BJ (cell line): ENCODE measurements at regions of chr3 and their contacts with region 1.

Region 1: GRCh38 chr3:24101676-24102168 is 156.6 kb downstream of the NR1D2 start:
- DNase-seq: no peak
- H3K4me3 ChIP-seq: no peak overlapping the region
- H3K27me3 ChIP-seq: no peaks in the 10 kb centered on the region
- CTCF ChIP-seq: no peak

Region 2: DNA sequence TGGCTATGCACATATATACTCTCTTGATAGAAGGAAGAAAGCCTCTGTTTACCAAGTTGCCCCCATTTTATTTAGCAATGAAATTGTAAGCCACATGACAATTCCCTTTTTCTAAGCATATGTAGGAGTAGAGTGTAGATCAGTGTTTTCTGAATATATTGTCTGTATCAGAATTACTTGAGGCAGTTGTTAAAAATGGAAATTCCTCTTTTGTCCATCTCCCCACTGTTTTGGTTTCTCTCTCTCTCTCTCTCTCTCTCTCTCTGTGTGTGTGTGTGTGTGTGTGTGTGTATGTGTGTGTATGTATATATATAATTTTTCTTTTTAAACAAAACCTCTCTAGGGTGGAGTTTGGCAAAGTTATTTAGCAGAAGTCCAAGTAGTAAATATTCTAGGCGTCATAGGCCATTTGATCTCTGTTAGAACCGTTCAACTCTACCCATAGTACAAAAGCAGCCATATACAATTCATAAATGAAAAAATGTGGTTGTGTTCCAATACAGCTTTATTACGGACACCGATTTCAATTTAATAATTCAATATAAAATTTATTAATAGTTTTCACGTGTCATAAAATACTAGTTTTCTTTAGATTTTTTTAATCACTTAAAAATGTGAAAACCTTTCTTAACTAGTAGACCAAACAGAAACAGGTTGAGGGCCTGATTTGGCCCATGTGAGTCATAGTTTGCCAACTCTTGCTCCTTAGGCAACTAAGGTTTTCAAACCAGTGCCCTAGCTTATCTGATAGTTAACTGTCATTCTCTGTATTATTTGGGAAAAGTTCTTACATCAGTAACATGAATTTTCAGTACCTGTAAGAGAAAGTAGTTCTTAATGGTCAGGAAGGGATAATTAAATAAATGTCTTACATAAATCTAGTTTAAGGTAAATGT is 256.1 kb before region 1 on chr3:
- CTCF ChIA-PET with region 1: no interaction called
- POLR2A ChIA-PET with region 1: no interaction called
- DNase-seq: no peak
- H3K4me3 ChIP-seq: no peak overlapping the region
- H3K27me3 ChIP-seq: no peaks in the 10 kb centered on the region
- CTCF ChIP-seq: no peak

Region 3: GRCh38 chr3:24088782-24089181 is 12.9 kb before region 1 on chr3:
- CTCF ChIA-PET with region 1: interaction called, 14 read pairs
- POLR2A ChIA-PET with region 1: no interaction called
- DNase-seq: no peak
- H3K4me3 ChIP-seq: no peak overlapping the region
- H3K27me3 ChIP-seq: no peaks in the 10 kb centered on the region
- CTCF ChIP-seq: peak; percentile 64